ENCODE measurements at regions of chr7 and their contacts with region 1.

Region 1: GRCh38 chr7:28570113-28570969 is 158.0 kb downstream of the CREB5 start:
- DNase-seq: no peak
- H3K4me3 ChIP-seq: no peak overlapping the region
- H3K27ac ChIP-seq: no peak overlapping the region
- H3K4me1 ChIP-seq: peaks cover 8 to 29% of the 10 kb centered on the region in 2 experiments; a peak in 3 of 4 replicates
- H3K27me3 ChIP-seq: no peaks in the 10 kb centered on the region
- CTCF ChIP-seq: no peak
- EP300 ChIP-seq: no peak
- RAD21 ChIP-seq: no peak

Region 2: GRCh38 chr7:28315565-28316420 is 254.5 kb before region 1 on chr7:
- CTCF ChIA-PET with region 1: no interaction called
- POLR2A ChIA-PET with region 1: no interaction called
- DNase-seq: peak; percentile 80
- H3K4me3 ChIP-seq: no peak overlapping the region
- H3K27ac ChIP-seq: peak overlapping the region in 1 of 2 experiments; percentile 57; a peak in 2 of 4 replicates
- H3K4me1 ChIP-seq: peaks cover 0 to 29% of the 10 kb centered on the region in 2 experiments; a peak in 2 of 4 replicates
- H3K27me3 ChIP-seq: peaks cover 29% of the 10 kb centered on the region; the same call in 1 of the 2 replicates
- CTCF ChIP-seq: no peak
- EP300 ChIP-seq: peak; percentile 21 to 93; a peak in 3 of 4 replicates
- RAD21 ChIP-seq: no peak

Region 3: DNA sequence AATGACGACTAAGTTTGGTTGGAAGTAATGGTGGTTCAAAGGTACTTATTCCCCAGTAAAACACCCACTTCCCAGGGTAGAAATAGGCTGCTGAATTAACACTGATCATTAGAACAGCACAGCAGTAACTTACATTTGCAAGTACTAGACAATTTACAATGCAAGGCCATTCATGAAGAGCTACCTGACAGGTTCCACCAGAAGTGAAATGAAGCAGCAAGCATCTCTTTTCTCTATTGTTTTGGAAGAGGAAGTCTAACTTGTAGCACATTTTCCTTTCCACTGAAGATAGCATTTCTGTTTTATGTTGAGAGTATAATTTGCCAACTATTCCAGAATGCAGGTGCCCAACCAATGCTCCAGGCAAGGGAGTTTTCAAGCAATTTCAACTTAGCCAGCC is 12.1 kb before region 1 on chr7:
- CTCF ChIA-PET with region 1: interaction called, 15 read pairs
- POLR2A ChIA-PET with region 1: interaction called, 4 read pairs
- DNase-seq: no peak
- H3K4me3 ChIP-seq: no peak overlapping the region
- H3K27ac ChIP-seq: no peak overlapping the region
- H3K4me1 ChIP-seq: peaks cover 0 to 26% of the 10 kb centered on the region in 2 experiments; a peak in 2 of 4 replicates
- H3K27me3 ChIP-seq: no peaks in the 10 kb centered on the region; the same call in 1 of the 2 replicates
- CTCF ChIP-seq: no peak
- EP300 ChIP-seq: 0 out of 4 replicates have a peak, but pooled peaks of 1 of the 2 experiments have one; percentile 27
- RAD21 ChIP-seq: no peak

Measured in SK-N-SH (cell line).